ENCODE measurements at regions of chr15 and their contacts with region 1.

Region 1: GRCh38 chr15:41116116-41116871 is at the start of gene INO80:
- DNase-seq: peak; percentile 98
- ATAC-seq: peak; percentile 84
- H3K4me3 ChIP-seq: peak within 1 kb of the TSS; percentile 89 to 96
- H3K27ac ChIP-seq: peak within 1 kb of the TSS; percentile 99
- H3K4me1 ChIP-seq: peaks cover 3 to 18% of the 10 kb centered on the region in 2 experiments; a peak in 3 of 4 replicates
- H3K27me3 ChIP-seq: no peaks in the 10 kb centered on the region
- CTCF ChIP-seq: no peak
- POLR2A ChIP-seq: peak; percentile 95
- RAD21 ChIP-seq: no peak
- total RNA-seq, gene INO80: 28.2 TPM

Region 2: DNA sequence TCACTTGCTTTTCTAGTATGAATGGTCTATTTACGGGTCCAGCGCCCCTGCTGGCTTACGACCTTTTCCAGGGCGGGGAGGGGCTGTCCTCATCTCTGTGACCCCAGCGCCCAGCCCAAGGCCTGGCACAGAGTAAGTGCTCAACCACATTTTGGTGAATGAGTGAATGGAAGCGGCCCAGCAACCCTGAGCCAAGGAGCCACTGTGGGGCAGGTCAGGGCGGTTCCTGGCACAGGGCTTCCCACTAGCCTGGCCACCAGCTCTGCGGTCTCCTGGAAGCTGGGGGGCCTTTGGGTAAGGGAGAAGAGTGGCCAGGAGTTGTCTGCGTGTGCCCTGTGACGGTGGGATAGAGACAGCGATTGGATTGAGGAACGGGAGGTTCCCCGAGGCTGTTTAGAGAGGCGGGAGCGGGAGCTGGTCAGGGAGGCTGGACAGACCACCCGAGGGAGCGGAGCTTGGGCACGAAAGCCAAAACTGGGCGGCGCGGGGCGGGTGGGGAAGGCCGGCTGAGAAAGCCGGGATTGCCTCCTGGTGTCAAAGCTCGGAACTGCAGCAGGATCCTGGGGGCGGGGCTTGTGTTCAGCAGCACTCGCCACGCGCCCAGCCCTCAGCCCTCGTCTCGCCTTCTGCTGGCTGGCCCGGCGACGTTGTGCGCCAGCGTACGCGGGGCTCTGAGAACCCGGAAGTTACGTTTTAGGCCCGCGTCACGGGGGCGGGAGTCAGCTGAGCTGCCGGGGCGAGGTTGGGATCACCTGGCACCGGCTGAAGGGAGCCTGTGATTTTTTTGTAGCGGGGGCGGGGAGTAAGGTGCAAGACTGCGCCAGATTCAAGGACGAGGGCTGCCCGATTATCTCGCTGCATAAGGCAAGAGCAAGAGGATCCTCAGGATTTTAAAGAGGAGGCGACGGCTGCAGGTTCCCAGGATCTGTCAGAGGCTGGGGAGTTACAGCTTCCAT is 222.3 kb before region 1 on chr15 and contains the start of gene VPS18:
- CTCF ChIA-PET with region 1: no interaction called
- POLR2A ChIA-PET with region 1: no interaction called
- RAD21 ChIA-PET with region 1: no interaction called
- intact Hi-C with region 1: no loop called
- DNase-seq: peak; percentile 94
- ATAC-seq: peak; percentile 93
- H3K4me3 ChIP-seq: peak within 1 kb of the TSS; percentile 94
- H3K27ac ChIP-seq: peak within 1 kb of the TSS; percentile 73
- H3K4me1 ChIP-seq: peaks cover 7 to 26% of the 10 kb centered on the region in 2 experiments; a peak in 3 of 4 replicates
- H3K27me3 ChIP-seq: no peaks in the 10 kb centered on the region
- CTCF ChIP-seq: peak; percentile 70 to 89 (median 81)
- POLR2A ChIP-seq: peak; percentile 67
- RAD21 ChIP-seq: peak; percentile 97
- total RNA-seq, gene VPS18: 16.9 TPM

Region 3: GRCh38 chr15:41073028-41073427 is 43.3 kb before region 1 on chr15:
- CTCF ChIA-PET with region 1: no interaction called
- POLR2A ChIA-PET with region 1: no interaction called
- RAD21 ChIA-PET with region 1: interaction called in 1 of 2 experiments, 12 read pairs
- intact Hi-C with region 1: no loop called
- DNase-seq: no peak
- ATAC-seq: no peak
- H3K4me3 ChIP-seq: no peak overlapping the region
- H3K27ac ChIP-seq: no peak overlapping the region
- H3K4me1 ChIP-seq: no peaks in the 10 kb centered on the region
- H3K27me3 ChIP-seq: no peaks in the 10 kb centered on the region
- CTCF ChIP-seq: no peak
- POLR2A ChIP-seq: no peak
- RAD21 ChIP-seq: no peak

Region 4: DNA sequence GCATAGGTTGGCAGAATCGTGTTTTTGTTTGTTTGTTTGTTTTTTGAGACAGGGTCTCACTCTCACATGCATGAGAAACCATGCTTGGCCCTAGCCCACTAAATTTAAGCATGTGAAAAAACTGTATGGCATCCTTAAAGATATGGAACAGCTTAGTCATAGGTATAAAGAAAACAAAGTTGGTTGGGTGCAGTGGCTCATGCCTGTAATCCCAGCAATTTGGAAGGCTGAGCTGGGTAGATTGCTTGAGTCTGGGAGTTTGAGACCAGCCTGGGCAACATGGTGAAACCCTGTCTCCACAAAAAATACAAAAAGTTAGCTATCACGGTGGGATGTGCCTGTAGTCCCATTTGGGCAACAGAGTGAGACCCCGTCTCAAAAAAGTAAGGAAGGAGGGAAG is 89.0 kb after region 1 on chr15:
- CTCF ChIA-PET with region 1: no interaction called
- POLR2A ChIA-PET with region 1: no interaction called
- RAD21 ChIA-PET with region 1: no interaction called
- intact Hi-C with region 1: no loop called
- DNase-seq: no peak
- ATAC-seq: no peak
- H3K4me3 ChIP-seq: no peak overlapping the region
- H3K27ac ChIP-seq: no peak overlapping the region
- H3K4me1 ChIP-seq: no peaks in the 10 kb centered on the region
- H3K27me3 ChIP-seq: no peaks in the 10 kb centered on the region
- CTCF ChIP-seq: no peak
- POLR2A ChIP-seq: no peak
- RAD21 ChIP-seq: no peak

Region 5: DNA sequence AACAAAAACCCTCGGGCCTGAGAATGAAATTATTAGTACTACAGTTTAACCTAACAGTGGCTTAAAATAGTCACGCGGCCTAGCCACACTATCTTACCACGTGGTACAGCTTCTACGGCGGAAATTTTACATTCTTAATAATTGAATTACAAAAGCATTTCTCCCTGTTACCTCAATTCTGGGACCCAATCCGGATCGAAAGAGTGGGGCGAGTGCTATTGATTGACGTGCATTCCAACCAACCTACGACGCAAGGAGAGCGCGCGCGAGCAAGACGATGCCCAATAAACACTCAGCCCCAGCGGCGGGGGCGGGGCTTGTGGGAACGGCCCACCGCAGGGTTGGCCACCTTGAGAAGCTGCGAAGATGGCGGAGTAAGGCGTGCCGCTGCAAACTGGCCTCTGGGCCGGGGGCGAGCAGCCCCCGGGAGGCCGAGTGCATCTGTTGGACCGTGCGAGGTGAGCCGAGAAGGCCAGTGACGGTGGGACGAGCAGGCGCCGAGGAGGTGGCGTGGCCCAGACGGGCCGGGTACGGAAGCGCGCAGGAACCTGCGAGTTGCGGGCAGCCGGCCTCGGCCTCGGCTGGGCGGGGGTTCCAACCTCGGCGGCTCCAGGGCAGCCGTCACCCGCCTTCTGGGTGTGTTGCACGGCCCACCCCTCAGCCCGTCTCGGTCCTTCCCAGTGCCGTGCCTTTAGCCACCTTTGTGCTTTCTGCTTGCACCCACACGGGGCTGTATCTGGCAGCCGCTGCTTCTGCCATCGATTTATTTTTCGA is 167.5 kb after region 1 on chr15:
- CTCF ChIA-PET with region 1: no interaction called
- POLR2A ChIA-PET with region 1: no interaction called
- RAD21 ChIA-PET with region 1: no interaction called
- intact Hi-C with region 1: loop called (anchors 5 kb)
- DNase-seq: peak; percentile 98
- ATAC-seq: peak; percentile 99
- H3K4me3 ChIP-seq: peak overlapping the region; percentile 71 to 84
- H3K27ac ChIP-seq: peak overlapping the region; percentile 82
- H3K4me1 ChIP-seq: peaks cover 9 to 32% of the 10 kb centered on the region in 2 experiments; a peak in 3 of 4 replicates
- H3K27me3 ChIP-seq: no peaks in the 10 kb centered on the region
- CTCF ChIP-seq: no peak
- POLR2A ChIP-seq: peak; percentile 65
- RAD21 ChIP-seq: no peak